Calu3 (cell line): ENCODE measurements at regions of chr5 and their contacts with region 1.

Region 1: DNA sequence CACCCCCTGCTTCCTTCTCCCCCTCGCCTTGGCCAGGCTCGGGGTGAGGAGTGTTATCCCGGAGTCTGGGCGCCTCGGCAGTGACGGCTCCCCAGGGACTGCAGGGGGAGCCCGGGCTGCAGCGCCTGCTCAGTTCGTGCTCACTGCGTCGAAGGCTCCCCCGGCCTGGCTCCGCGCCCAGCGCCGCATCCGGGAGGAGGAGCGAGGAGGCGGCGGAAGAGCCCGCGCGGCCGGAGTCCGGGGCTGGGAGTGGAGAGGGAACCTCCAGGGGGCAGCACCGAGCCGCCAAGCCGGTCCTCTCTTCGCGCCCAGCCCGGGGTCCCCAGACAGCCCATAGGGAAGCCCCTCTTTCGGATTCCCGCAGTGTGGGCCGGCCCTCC is 1.3 kb upstream of the EGR1 start:
- DNase-seq: peak; percentile 99
- H3K4me3 Mint-ChIP-seq: peak overlapping the region; percentile 78
- H3K27ac Mint-ChIP-seq: peak overlapping the region; percentile 94
- H3K4me1 Mint-ChIP-seq: peaks cover 22% of the 10 kb centered on the region
- H3K27me3 Mint-ChIP-seq: peaks cover 32% of the 10 kb centered on the region
- CTCF ChIP-seq: peak; percentile 96

Region 2: GRCh38 chr5:138492560-138493045 is 28.6 kb after region 1 on chr5:
- CTCF ChIA-PET with region 1: interaction called, 11 read pairs
- intact Hi-C with region 1: no loop called
- DNase-seq: no peak
- H3K4me3 Mint-ChIP-seq: peak overlapping the region; percentile 80
- H3K27ac Mint-ChIP-seq: peak overlapping the region; percentile 79
- H3K4me1 Mint-ChIP-seq: peaks cover 14% of the 10 kb centered on the region
- H3K27me3 Mint-ChIP-seq: peaks cover 39% of the 10 kb centered on the region
- CTCF ChIP-seq: no peak

Region 3: GRCh38 chr5:138542956-138543729 is 79.1 kb after region 1 on chr5 and contains the start of gene ETF1:
- CTCF ChIA-PET with region 1: interaction called, 3 read pairs
- intact Hi-C with region 1: loop called (anchors 10 kb)
- DNase-seq: peak; percentile 100
- H3K4me3 Mint-ChIP-seq: peak within 1 kb of the TSS; percentile 80
- H3K27ac Mint-ChIP-seq: peak within 1 kb of the TSS; percentile 88
- H3K4me1 Mint-ChIP-seq: peaks cover 51% of the 10 kb centered on the region
- H3K27me3 Mint-ChIP-seq: no peaks in the 10 kb centered on the region
- CTCF ChIP-seq: no peak
- total RNA-seq, gene ETF1: 159 and 164 TPM in 2 replicates